ENCODE measurements at regions of chr7 and their contacts with region 1.

Region 1: GRCh38 chr7:74068393-74069085 is 15.1 kb upstream of the LIMK1 start:
- DNase-seq: no peak
- H3K4me3 Mint-ChIP-seq: no peak overlapping the region
- H3K27ac Mint-ChIP-seq: no peak overlapping the region
- H3K4me1 Mint-ChIP-seq: peaks cover 2% of the 10 kb centered on the region
- H3K27me3 Mint-ChIP-seq: no peaks in the 10 kb centered on the region

Region 2: GRCh38 chr7:73978661-73979563 is 89.6 kb before region 1 on chr7:
- CTCF ChIA-PET with region 1: no interaction called
- POLR2A ChIA-PET with region 1: no interaction called
- DNase-seq: peak; percentile 40
- H3K4me3 Mint-ChIP-seq: no peak overlapping the region
- H3K27ac Mint-ChIP-seq: no peak overlapping the region
- H3K4me1 Mint-ChIP-seq: no peaks in the 10 kb centered on the region
- H3K27me3 Mint-ChIP-seq: peaks cover 8% of the 10 kb centered on the region

Region 3: GRCh38 chr7:74083117-74083876 is 14.8 kb after region 1 on chr7 and contains the start of gene LIMK1:
- CTCF ChIA-PET with region 1: interaction called, 10 read pairs
- POLR2A ChIA-PET with region 1: interaction called, 27 read pairs
- DNase-seq: peak; percentile 85
- H3K4me3 Mint-ChIP-seq: peak within 1 kb of the TSS; percentile 79
- H3K27ac Mint-ChIP-seq: peak within 1 kb of the TSS; percentile 78
- H3K4me1 Mint-ChIP-seq: peaks cover 15% of the 10 kb centered on the region
- H3K27me3 Mint-ChIP-seq: no peaks in the 10 kb centered on the region
- total RNA-seq, gene LIMK1: 22.5 to 26.1 TPM

Region 4: DNA sequence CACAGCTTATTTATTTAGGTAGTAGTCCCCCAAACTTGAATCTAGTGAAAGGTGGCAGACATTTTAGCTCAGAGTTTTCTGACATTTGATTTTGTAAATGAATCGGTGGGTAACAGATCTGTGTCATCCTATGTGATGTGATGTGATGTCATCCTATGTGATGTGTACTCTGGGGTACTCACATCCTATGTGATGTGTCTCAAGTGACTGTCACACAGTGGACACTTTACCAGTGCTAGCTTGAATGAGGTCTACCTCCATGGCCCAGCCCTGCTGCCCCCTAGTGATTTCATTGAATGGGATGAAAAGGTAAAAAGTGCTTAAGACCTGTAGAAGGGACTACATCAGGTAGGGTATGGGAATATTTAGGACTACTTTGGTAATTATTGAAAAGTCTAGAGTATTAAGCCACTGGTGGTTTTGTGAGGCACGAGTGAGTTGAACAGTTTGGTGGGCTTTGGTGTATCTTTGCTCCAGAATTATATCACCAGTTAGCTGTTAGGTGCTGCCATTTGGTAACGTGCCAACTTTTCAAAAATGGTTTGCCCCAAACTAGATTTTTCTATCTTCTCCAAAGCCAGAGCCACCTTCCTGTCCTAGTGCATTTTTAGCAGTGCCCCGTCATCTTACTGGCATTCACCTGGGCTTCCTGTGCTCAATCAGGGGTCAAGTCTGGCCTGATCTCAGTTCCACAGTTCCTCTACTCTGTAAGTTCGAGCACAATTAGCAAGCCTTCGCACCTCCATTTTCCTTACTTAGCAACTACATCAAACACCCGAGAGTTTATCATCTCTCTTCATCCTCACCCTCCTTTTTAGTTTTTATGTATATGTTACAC is 115.3 kb after region 1 on chr7:
- CTCF ChIA-PET with region 1: interaction called, 13 read pairs
- POLR2A ChIA-PET with region 1: no interaction called
- DNase-seq: no peak
- H3K4me3 Mint-ChIP-seq: no peak overlapping the region
- H3K27ac Mint-ChIP-seq: peak overlapping the region; percentile 45
- H3K4me1 Mint-ChIP-seq: peaks cover 61% of the 10 kb centered on the region
- H3K27me3 Mint-ChIP-seq: no peaks in the 10 kb centered on the region

Region 5: GRCh38 chr7:74401137-74401859 is 332.8 kb after region 1 on chr7:
- CTCF ChIA-PET with region 1: interaction called, 19 read pairs
- POLR2A ChIA-PET with region 1: no interaction called
- DNase-seq: peak; percentile 75
- H3K4me3 Mint-ChIP-seq: no peak overlapping the region
- H3K27ac Mint-ChIP-seq: no peak overlapping the region
- H3K4me1 Mint-ChIP-seq: no peaks in the 10 kb centered on the region
- H3K27me3 Mint-ChIP-seq: no peaks in the 10 kb centered on the region